HEK293 (cell line): ENCODE measurements at regions of chr1 and their contacts with region 1.

Region 1: DNA sequence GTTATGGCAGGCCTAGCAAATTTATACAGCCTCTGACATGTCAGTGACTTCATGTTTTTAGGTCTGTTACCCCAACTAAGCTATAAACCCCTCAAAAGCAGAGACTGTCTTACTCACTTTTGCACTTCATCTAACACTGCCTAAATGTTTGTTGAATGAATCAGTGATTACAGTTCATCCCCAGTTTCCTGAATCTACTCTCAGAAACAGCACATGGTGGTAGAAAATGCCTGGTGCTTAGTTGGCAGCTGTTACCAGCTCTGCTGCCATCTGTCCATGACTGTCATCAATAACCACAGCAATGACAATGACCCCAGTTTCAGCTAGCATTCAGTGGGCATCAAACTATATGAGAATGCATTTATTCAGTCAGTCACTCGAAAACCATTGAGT is 110.5 kb upstream of the SERBP1 start:
- H3K4me3 ChIP-seq: no peak overlapping the region
- H3K27ac ChIP-seq: no peak overlapping the region
- H3K4me1 ChIP-seq: no peaks in the 10 kb centered on the region
- CTCF ChIP-seq: no peak

Region 2: DNA sequence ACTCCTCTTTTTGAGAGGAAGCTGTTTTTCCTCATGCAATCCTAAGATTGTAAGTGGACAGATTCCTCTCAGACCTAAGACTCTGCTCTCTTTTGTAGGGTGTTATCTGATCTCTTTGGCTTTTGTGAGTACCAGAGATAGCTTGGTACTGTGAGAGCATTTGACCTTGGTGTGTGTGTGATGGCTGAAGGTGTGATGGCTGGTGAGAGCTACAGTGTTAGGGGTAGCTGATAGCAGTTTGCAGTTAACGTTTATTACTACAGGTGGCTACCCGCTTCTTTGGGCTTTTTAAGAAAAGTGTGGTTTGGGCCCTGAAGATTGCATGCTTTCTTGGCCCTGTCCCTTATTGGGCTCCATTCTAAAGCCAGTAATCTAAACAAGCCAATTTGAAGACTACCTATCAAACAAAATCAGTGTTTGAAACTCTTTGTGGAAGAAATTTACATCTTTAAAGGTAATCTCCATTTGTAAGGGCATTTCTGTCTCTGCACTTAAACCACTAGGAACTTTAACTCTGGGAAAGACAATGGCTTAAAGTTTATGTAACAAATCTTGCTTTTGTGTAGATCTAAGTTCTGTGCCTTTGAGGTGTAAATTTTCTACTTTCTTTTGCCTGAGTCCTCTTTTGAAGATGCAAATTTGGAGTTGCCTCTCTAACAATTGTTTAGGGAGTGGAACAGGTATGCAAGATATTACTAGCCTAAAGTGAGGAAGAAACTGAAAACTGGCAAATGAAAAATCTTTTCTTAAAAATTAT is 25.2 kb before region 1 on chr1:
- CTCF ChIA-PET with region 1: no interaction called
- POLR2A ChIA-PET with region 1: no interaction called
- H3K4me3 ChIP-seq: no peak overlapping the region
- H3K27ac ChIP-seq: no peak overlapping the region
- H3K4me1 ChIP-seq: no peaks in the 10 kb centered on the region
- CTCF ChIP-seq: no peak

Region 3: DNA sequence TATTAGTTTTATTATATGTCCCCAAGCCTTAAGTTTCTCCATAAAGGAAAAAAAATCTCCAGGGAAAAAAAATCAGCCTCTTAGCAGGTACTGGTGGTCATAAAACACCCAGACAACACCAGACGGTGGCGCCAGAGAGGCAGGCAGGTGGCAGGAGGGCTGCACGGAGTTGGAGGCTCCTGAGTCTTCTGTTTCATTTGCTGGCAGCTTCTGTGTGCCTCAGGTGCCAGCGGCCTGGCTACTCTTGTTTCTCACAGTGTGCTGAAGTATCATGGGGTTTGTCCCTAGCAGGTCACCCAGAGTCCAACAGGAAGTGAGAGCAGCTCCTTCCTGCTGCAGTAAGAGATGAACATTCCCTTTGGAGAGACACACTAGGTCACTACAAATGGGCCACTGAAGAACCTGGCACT is 21.0 kb after region 1 on chr1:
- CTCF ChIA-PET with region 1: interaction called, 37 read pairs
- POLR2A ChIA-PET with region 1: no interaction called
- H3K4me3 ChIP-seq: no peak overlapping the region
- H3K27ac ChIP-seq: no peak overlapping the region
- H3K4me1 ChIP-seq: no peaks in the 10 kb centered on the region
- CTCF ChIP-seq: peak; percentile 54; the same call in 1 of the 2 replicates

Region 4: DNA sequence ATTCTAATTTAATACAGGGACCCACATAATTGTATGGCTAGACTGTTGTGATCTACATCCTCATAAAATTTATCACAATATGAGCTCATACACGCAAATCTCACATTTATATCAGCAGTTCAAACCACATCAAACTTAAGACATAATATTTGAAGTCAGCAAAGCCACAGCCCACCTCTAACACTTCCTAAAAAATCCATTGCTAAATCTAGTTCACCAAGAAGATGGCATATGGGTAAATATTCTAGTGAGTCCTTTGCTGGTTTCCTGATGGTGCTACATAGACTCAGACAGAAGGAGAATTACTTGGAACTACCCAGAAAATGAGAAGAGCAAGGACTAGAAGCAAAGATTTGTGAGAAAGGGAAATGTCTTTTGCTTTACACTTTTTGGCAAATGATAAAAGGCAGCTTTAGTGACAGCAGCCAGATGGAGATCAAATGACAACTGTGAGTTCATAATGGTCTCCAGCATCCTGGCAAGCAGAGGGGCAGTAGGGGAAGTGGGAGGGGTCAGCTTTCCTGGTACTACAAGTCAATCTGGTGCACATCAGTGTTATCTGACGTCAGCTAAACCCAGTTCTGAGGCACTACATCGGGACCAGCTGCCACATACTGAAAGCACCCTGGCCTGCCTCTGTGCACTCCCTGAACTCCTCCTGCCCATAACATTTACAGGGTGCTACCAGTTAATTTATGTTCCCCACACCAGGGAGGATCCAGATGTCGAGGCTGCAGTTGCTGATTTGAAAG is 133.7 kb after region 1 on chr1:
- CTCF ChIA-PET with region 1: no interaction called
- POLR2A ChIA-PET with region 1: no interaction called
- H3K4me3 ChIP-seq: no peak overlapping the region
- H3K27ac ChIP-seq: no peak overlapping the region
- H3K4me1 ChIP-seq: peaks cover 7% of the 10 kb centered on the region
- CTCF ChIP-seq: no peak